ENCODE measurements at regions of chr9 and their contacts with region 1.

Region 1: DNA sequence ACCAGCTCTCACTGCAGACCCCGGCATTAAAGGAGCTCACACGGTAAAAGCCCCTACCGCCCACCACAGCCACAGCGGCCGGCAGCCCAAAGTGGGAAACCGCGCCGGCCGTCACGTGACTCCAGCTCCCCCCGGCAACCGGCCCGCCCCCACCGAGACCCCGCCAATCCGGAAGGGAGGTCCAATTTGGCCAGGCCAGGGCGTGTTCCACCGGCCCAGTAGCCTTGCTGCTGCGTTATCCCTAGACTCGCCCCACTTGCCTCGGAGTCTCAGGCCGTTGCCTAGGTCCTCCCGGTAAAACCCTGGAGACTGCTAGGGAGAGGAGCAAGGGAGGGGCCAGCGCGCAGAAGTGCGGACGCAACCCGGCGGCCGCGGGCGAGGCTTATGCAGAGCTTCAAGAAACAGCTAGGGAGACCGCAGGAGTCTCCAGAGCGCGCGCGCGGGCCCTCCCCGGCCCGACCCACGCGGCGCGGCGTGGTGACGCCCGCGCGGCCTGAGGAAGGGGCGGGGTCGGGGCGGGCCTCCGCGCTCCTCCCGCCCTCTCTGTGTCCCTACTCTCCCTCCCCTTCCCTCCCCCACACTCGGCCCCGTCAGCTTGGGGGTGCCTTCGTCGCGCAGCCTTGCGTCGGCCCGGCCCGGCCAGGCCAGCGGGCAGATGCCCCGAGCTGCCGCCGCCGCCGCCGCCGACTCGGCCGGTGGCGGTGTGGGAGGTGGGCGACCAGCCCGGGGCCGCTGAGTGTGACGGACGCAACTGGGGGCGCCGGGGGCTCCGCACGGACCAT is at the start of gene RIC1:
- DNase-seq: peak; percentile 97
- H3K4me3 Mint-ChIP-seq: peak within 1 kb of the TSS; percentile 100
- H3K27ac Mint-ChIP-seq: peak within 1 kb of the TSS; percentile 99
- H3K4me1 Mint-ChIP-seq: peaks cover 49% of the 10 kb centered on the region
- H3K27me3 Mint-ChIP-seq: no peaks in the 10 kb centered on the region
- total RNA-seq, gene RIC1: 20.2 and 20.4 TPM in 2 replicates

Region 2: GRCh38 chr9:5437254-5438216 is 191.2 kb before region 1 on chr9 and contains the start of gene PLGRKT:
- intact Hi-C with region 1: loop called (anchors 1 kb)
- DNase-seq: peak; percentile 97
- H3K4me3 Mint-ChIP-seq: peak within 1 kb of the TSS; percentile 93
- H3K27ac Mint-ChIP-seq: peak within 1 kb of the TSS; percentile 97
- H3K4me1 Mint-ChIP-seq: peaks cover 52% of the 10 kb centered on the region
- H3K27me3 Mint-ChIP-seq: no peaks in the 10 kb centered on the region
- total RNA-seq, gene PLGRKT: 53.0 and 54.4 TPM in 2 replicates

Region 3: DNA sequence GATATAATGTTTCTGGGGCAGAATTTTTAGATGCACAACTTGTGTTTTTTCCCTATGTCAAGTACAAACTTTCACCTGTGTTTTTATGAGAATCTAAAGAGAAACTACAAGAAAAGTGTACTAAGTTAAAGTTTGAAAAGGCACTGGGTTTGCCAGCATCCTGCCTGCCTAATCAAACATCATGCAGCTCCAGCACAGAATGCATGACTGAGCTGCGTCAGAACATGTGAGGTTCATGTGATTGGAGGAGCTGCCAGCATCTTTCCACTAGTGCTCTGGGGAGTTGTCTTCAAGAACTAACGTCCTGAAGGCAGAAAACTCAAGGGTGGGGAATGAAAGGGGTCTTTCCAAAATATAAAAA is 45.9 kb before region 1 on chr9:
- intact Hi-C with region 1: loop called (anchors 2 kb)
- DNase-seq: peak; percentile 88
- H3K4me3 Mint-ChIP-seq: peak overlapping the region; percentile 40
- H3K27ac Mint-ChIP-seq: peak overlapping the region; percentile 92
- H3K4me1 Mint-ChIP-seq: peaks cover 69% of the 10 kb centered on the region
- H3K27me3 Mint-ChIP-seq: no peaks in the 10 kb centered on the region

Region 4: GRCh38 chr9:5764130-5764868 is 135.6 kb after region 1 on chr9:
- intact Hi-C with region 1: loop called (anchors 5 kb)
- DNase-seq: peak; percentile 73
- H3K4me3 Mint-ChIP-seq: no peak overlapping the region
- H3K27ac Mint-ChIP-seq: peak overlapping the region; percentile 45
- H3K4me1 Mint-ChIP-seq: peaks cover 33% of the 10 kb centered on the region
- H3K27me3 Mint-ChIP-seq: no peaks in the 10 kb centered on the region

Region 5: GRCh38 chr9:6412487-6413364 is 784.0 kb after region 1 on chr9 and contains the start of gene UHRF2:
- intact Hi-C with region 1: loop called (anchors 2 kb)
- DNase-seq: peak; percentile 99
- H3K4me3 Mint-ChIP-seq: peak within 1 kb of the TSS; percentile 88
- H3K27ac Mint-ChIP-seq: peak within 1 kb of the TSS; percentile 97
- H3K4me1 Mint-ChIP-seq: peaks cover 27% of the 10 kb centered on the region
- H3K27me3 Mint-ChIP-seq: peaks cover 4% of the 10 kb centered on the region
- total RNA-seq, gene UHRF2: 61.9 and 71.6 TPM in 2 replicates

Region 6: GRCh38 chr9:6757456-6758247 is 1128.9 kb after region 1 on chr9 and contains the start of gene KDM4C:
- intact Hi-C with region 1: loop called (anchors 5 kb)
- DNase-seq: peak; percentile 98
- H3K4me3 Mint-ChIP-seq: peak within 1 kb of the TSS; percentile 97
- H3K27ac Mint-ChIP-seq: peak within 1 kb of the TSS; percentile 99
- H3K4me1 Mint-ChIP-seq: peaks cover 23% of the 10 kb centered on the region
- H3K27me3 Mint-ChIP-seq: no peaks in the 10 kb centered on the region
- total RNA-seq, gene KDM4C: 36.4 and 39.8 TPM in 2 replicates

Measured in activated CD4-positive, alpha-beta T cell treated with anti-CD3 and anti-CD28 coated beads, Interleukin-2, amount 10 ng/mL, durations not matched to agents 24 days and 14 days (primary cell).